Stomach (tissue), 19 donors: ENCODE measurements at regions of chr7 and their contacts with region 1.

Region 1: DNA sequence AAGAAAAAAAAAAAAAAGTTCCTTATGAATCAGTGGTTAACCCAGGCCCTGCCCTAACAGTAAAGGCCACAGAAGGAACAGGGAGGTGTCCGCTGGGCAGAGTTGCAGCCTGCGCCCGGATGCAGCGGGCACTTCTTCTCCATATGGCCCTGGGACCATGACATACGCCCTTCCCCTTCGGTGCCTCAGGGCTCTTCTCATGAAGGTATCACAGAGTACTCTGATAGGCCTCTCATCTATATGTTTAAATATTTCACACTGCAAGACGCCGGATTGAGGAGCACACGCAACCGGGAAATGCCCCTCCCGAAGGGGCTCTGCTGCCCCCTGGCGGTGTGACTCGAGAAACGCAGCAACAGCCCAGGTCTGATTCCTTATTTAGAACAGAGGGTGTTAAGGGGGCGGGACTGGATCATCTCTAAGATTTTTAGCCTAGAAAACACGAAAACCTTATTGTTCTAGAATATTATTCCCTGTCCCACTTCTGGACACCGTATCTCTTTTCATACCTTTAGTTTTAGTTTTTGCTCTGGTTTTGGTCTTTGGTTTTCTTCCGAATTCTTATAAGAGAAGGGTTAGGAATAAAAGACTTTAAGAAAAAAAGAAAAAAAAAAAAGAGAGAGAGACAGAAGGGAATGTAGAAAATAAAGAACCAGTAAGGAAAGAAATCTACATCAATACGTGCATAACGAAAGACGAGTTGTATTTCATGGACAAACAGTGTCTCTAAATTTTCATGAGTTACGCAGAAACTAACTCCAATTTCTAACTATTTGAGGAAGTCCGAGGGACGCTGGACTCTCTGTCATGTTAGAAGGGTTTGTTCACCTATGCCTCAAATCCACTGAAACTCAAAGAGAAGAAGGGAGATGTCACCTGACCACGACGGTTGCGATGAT is 12.0 kb downstream of the DAGLB start:
- DNase-seq: peak; percentile 82 to 92
- H3K4me3 ChIP-seq: peak overlapping the region in 3 of 4 donors; percentile 3 to 16 (median 12)
- H3K27ac ChIP-seq: peak overlapping the region in 4 of 5 donors; percentile 5 to 71 (median 60)
- H3K4me1 ChIP-seq: peaks cover 8 to 60% (median 26%) of the 10 kb centered on the region in 4 donors
- H3K27me3 ChIP-seq: no peaks in the 10 kb centered on the region
- CTCF ChIP-seq: peak in 5 of 7 experiments; percentile 64 to 95 (median 91)
- EP300 ChIP-seq: no peak
- POLR2A ChIP-seq: no peak

Region 2: DNA sequence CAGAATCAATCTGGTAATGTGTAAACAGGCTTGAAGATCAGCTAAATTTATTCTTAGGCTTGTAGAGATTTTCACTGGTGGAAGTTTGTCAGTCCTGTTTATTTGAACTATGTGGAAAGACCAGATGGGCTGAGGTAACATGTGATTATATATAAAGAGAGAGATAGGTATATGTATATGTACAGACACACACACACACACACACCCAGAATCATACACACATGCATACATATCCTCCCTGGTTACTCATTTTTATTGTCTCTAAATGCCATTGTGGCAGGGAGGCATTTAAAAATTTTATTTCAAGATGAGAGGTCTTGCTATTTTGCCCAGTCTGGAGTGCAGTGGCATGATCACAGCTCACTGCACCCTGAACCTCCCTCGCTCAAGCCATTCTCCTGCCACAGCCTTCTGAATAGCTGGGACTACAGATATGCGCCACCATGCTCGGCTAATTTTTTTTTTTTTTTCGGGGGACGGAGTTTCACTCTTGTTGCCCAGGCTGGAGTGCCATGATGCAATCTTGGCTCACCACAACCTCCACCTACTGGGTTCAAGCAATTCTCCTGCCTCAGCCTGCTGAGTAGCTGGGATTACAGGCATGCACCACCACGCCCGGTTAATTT is 85.2 kb before region 1 on chr7:
- intact Hi-C with region 1: loop called (anchors 10 kb)
- DNase-seq: no peak
- H3K4me3 ChIP-seq: no peak overlapping the region
- H3K27ac ChIP-seq: no peak overlapping the region
- H3K4me1 ChIP-seq: peaks cover 0 to 23% (median 21%) of the 10 kb centered on the region in 4 donors
- H3K27me3 ChIP-seq: no peaks in the 10 kb centered on the region
- CTCF ChIP-seq: no peak
- EP300 ChIP-seq: no peak
- POLR2A ChIP-seq: no peak